ENCODE measurements at regions of chr17 and their contacts with region 1.

Region 1: GRCh38 chr17:8140060-8141029 is 11.9 kb downstream of the PER1 start:
- DNase-seq: peak in 2 of 3 donors; percentile 64 to 65
- ATAC-seq: peak; percentile 3
- H3K4me3 ChIP-seq: no peak overlapping the region
- H3K27ac ChIP-seq: no peak overlapping the region
- H3K4me1 ChIP-seq: no peaks in the 10 kb centered on the region
- H3K27me3 ChIP-seq: no peaks in the 10 kb centered on the region

Region 2: DNA sequence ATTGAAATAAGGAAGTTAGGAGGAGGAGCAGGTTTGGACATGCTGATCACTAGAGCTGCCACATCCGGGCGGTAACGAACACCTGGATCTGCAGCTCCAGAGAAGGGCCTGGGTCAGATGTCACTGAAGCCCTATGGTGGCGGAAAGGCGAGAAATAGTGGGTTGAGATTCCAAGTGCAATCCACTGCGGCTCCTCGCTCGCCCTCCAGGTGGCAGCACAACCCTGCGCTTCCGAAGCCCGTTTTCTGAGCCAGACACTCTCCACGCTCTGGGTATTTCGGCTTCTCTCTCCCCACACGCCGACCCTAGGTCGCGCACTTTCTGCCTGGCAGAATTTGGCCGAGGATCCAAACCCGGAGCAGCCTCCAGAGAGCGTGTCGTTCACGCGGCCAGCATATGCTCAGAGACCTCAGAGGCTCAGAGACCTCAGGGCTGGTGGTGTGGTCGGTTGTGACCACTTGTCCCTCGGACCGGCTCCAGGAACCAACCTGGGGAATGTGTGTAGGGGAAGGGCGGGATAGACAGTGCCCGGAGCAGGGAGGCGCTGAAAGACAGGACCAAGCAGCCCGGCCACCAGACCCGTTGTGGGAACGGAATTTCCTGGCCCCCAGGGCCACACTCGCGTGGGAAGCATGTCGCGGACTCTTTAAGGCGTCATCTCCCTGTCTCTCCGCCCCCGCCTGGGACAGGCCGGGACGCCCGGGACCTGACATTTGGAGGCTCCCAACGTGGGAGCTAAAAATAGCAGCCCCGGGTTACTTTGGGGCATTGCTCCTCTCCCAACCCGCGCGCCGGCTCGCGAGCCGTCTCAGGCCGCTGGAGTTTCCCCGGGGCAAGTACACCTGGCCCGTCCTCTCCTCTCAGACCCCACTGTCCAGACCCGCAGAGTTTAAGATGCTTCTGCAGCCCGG is 859.6 kb before region 1 on chr17:
- intact Hi-C with region 1: no loop called
- DNase-seq: peak; percentile 83 to 92 (median 92)
- ATAC-seq: peak; percentile 73 to 77
- H3K4me3 ChIP-seq: peak overlapping the region; percentile 37
- H3K27ac ChIP-seq: peak overlapping the region; percentile 92
- H3K4me1 ChIP-seq: no peaks in the 10 kb centered on the region
- H3K27me3 ChIP-seq: no peaks in the 10 kb centered on the region

Region 3: DNA sequence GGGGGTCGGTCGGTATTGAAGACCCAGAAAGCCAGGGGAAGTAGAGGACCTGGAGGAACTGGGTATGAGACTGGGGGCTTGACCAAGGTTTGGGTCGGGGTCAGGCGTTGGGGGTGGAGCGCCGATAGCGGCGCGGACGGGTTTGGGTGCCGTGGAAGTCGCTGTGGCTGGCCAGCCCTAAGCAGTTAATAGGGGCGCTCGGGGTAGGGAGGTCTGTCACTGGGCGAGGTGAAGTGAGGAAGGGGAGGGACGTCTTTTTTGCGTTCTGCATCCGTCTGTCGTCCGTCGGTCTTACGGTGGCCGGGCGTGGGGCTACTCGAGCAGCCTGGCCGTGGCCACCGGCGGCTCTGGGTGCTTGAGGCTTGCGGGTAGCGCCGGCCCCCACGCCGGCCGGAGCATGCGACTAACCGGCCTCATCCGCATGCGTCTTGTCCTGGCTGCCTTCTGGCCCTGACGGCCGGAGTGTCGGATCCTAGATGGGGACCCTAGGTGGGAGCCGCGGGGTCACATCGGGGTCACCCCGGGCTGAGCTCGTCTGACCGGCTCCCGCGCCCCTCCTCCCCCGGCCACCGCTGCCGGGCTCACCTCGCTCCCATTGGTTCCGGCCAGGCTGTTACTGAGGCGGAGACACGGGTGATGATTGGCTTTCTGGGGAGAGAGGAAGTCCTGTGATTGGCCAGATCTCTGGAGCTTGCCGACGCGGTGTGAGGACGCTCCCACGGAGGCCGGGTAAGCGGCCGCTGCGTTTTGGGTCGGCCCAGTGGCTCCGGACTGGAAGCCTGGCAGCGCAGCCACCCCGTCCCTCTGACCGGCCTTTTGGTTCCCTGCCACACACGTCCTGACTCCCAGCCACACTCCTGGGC is 295.8 kb before region 1 on chr17:
- intact Hi-C with region 1: loop called in 1 of 4 experiments (anchors 10 kb)
- DNase-seq: peak; percentile 93 to 95 (median 95)
- ATAC-seq: peak; percentile 73 to 82
- H3K4me3 ChIP-seq: peak overlapping the region; percentile 67
- H3K27ac ChIP-seq: peak overlapping the region; percentile 53
- H3K4me1 ChIP-seq: peaks cover 5% of the 10 kb centered on the region
- H3K27me3 ChIP-seq: no peaks in the 10 kb centered on the region

Measured in right cardiac atrium (tissue), 5 donors.